Lower leg skin (tissue), 4 donors: ENCODE measurements at regions of chr4 and their contacts with region 1.

Region 1: DNA sequence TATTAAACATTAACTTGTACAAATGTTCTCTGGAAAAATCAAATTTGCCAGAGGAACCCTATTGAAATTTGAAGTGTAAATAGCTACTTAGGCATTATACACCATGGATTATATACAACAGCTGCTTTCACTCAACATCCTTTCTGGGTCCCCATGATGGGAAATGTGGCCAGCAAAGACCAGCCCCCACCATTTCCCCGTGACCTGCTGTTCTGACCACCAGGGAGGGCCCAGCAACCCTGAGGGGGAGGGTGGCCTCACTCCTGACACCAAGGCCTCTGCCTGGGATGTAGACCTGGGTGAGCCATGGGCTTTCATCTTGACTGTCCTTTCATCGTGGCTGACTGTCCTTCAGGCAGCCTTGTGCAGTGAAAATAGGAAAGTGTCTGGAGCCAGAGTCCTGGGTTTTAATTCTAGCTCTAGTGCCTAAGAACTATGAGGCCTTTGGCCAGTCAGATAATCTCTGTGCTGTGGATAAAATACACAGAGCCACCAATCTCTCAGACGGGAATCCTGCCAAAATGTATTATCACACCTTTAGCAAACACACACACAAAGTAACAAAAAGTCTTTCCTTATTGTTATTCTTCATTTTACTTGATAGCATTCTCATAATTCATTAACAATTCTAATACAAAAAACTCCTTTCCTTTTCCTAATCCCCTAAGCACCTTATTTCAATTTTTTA is 45.1 kb downstream of the NR3C2 start:
- DNase-seq: no peak
- H3K4me3 ChIP-seq: no peak overlapping the region
- CTCF ChIP-seq: no peak
- POLR2A ChIP-seq: no peak

Region 2: DNA sequence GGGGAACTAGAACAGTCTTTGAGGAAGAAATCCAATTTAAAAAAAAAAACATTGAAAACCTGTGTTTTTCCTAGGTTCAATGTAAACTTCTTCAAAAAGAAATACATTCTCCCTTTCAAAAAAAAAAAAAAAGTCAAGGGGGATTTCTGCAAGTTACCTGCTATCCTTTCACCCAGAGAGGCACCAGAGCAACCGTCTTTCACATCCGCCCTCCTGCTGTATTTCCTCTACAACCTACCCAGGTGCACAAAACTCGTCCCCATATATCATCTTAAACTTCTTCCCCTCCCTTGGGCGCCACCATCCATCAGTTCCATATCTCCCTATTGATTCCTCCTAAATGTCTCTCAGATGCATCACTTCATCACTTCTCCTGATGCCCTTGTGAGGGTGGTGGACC is 29.4 kb before region 1 on chr4:
- intact Hi-C with region 1: loop called (anchors 1 kb)
- DNase-seq: no peak
- H3K4me3 ChIP-seq: no peak overlapping the region
- CTCF ChIP-seq: no peak
- POLR2A ChIP-seq: no peak